B cell (primary cell): ENCODE measurements at regions of chr17 and their contacts with region 1.

Region 1: DNA sequence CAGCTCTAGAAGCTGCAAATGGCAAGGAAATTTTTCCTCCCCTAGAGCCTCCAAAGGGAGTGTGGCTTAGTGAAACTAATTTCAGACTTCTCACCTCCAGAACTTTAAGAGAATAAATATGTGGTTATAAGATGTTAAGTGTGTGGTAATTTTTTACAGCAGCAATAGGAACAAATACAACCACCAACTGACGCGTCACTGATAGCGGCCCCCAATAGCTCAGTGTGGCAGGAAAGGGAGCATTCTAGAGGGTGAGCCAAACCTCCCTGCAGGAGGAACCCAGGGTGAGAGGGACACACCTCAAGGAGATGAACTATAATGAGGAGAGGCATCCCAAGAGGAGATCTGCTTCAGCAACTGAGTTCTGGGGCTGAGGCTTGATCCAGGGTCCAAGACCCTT is 4.0 kb downstream of the CCL4 start:
- DNase-seq: no peak
- ATAC-seq: no peak
- H3K4me3 ChIP-seq: no peak overlapping the region
- H3K4me3 Mint-ChIP-seq: no peak overlapping the region
- H3K27ac ChIP-seq: no peak overlapping the region
- H3K27ac Mint-ChIP-seq: no peak overlapping the region
- H3K4me1 ChIP-seq: peaks cover 36 to 51% of the 10 kb centered on the region in 2 donors
- H3K4me1 Mint-ChIP-seq: peaks cover 55% of the 10 kb centered on the region
- H3K27me3 ChIP-seq: peaks cover 0 to 9% (median 0%) of the 10 kb centered on the region in 4 experiments
- H3K27me3 Mint-ChIP-seq: peaks cover 27% of the 10 kb centered on the region
- CTCF ChIP-seq: no peak

Region 2: GRCh38 chr17:36089888-36090836 is 17.5 kb before region 1 on chr17 and contains the start of gene CCL3:
- CTCF ChIA-PET with region 1: interaction called, 6 read pairs
- POLR2A ChIA-PET with region 1: interaction called, 4 read pairs
- intact Hi-C with region 1: loop called (anchors 1 kb)
- DNase-seq: peak; percentile 84
- ATAC-seq: peak; percentile 79
- H3K4me3 ChIP-seq: peak within 1 kb of the TSS; percentile 32 to 43 (median 36)
- H3K4me3 Mint-ChIP-seq: peak within 1 kb of the TSS; percentile 89
- H3K27ac ChIP-seq: peak within 1 kb of the TSS; percentile 58 to 85
- H3K27ac Mint-ChIP-seq: peak within 1 kb of the TSS; percentile 87
- H3K4me1 ChIP-seq: peaks cover 50 to 55% of the 10 kb centered on the region in 2 donors
- H3K4me1 Mint-ChIP-seq: peaks cover 70% of the 10 kb centered on the region
- H3K27me3 ChIP-seq: no peaks in the 10 kb centered on the region
- H3K27me3 Mint-ChIP-seq: no peaks in the 10 kb centered on the region
- CTCF ChIP-seq: no peak
- total RNA-seq, gene CCL3: 4.5 and 5.7 TPM in 2 replicates

Region 3: GRCh38 chr17:36117505-36118382 is 10.1 kb after region 1 on chr17:
- CTCF ChIA-PET with region 1: no interaction called
- POLR2A ChIA-PET with region 1: no interaction called
- intact Hi-C with region 1: loop called (anchors 2 kb)
- DNase-seq: no peak
- ATAC-seq: no peak
- H3K4me3 ChIP-seq: no peak overlapping the region
- H3K4me3 Mint-ChIP-seq: no peak overlapping the region
- H3K27ac ChIP-seq: no peak overlapping the region
- H3K27ac Mint-ChIP-seq: no peak overlapping the region
- H3K4me1 ChIP-seq: peaks cover 11 to 15% of the 10 kb centered on the region in 2 donors
- H3K4me1 Mint-ChIP-seq: peaks cover 26% of the 10 kb centered on the region
- H3K27me3 ChIP-seq: no peaks in the 10 kb centered on the region
- H3K27me3 Mint-ChIP-seq: peaks cover 3% of the 10 kb centered on the region
- CTCF ChIP-seq: no peak